Natural killer cell (primary cell): ENCODE measurements at regions of chr17 and their contacts with region 1.

Region 1: DNA sequence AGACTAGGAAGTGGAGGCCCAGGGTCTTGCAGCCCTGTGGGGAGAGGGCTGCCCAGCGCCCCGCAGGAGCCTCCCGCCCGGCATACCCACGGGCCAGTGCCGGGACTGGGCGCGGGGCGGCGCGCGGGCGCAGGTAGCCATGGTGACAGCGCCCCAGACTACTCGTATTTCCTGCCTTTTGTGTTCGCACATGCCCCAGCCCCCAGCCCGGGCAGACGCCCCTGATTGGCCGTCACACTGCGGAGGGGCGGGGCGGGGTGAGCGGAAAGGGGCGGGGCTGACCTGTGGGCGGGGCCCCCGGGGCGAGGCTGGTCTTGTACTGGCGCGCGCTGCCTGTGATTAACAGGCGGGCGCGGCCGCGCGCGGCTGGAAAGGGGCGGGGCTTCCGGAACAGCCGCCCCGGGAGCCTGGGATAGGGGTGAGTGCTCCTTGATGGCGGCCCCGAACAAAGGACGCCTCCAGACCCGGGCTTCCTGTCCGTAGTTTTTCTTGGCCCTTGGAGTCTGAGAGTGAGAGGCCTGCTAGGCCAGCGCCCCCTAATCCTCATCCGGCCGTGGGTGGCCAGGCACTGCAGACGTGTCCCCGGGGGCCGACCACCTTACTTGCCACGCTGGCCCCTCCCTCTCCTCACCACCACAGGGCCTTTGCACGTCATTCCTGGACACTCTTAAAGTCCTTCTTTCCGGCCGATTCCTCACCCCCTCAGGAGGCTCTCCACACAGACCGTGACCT is 71.0 kb downstream of the RAI1 start:
- DNase-seq: peak; percentile 96 to 97
- ATAC-seq: peak; percentile 87 to 97 (median 89)
- H3K4me3 ChIP-seq: peak overlapping the region; percentile 57
- H3K4me3 Mint-ChIP-seq: peak overlapping the region; percentile 91
- H3K27ac ChIP-seq: peak overlapping the region; percentile 93
- H3K27ac Mint-ChIP-seq: peak overlapping the region; percentile 95 to 99
- H3K4me1 ChIP-seq: peaks cover 78% of the 10 kb centered on the region
- H3K4me1 Mint-ChIP-seq: peaks cover 59 to 61% of the 10 kb centered on the region in 2 donors
- H3K27me3 ChIP-seq: no peaks in the 10 kb centered on the region
- H3K27me3 Mint-ChIP-seq: no peaks in the 10 kb centered on the region
- CTCF ChIP-seq: peak; percentile 40

Region 2: GRCh38 chr17:17535957-17536356 is 216.3 kb before region 1 on chr17:
- intact Hi-C with region 1: no loop called
- DNase-seq: no peak
- ATAC-seq: no peak
- H3K4me3 ChIP-seq: no peak overlapping the region
- H3K4me3 Mint-ChIP-seq: no peak overlapping the region
- H3K27ac ChIP-seq: no peak overlapping the region
- H3K27ac Mint-ChIP-seq: no peak overlapping the region
- H3K4me1 ChIP-seq: no peaks in the 10 kb centered on the region
- H3K4me1 Mint-ChIP-seq: peaks cover 0 to 4% of the 10 kb centered on the region in 2 donors
- H3K27me3 ChIP-seq: no peaks in the 10 kb centered on the region
- H3K27me3 Mint-ChIP-seq: no peaks in the 10 kb centered on the region
- CTCF ChIP-seq: no peak

Region 3: DNA sequence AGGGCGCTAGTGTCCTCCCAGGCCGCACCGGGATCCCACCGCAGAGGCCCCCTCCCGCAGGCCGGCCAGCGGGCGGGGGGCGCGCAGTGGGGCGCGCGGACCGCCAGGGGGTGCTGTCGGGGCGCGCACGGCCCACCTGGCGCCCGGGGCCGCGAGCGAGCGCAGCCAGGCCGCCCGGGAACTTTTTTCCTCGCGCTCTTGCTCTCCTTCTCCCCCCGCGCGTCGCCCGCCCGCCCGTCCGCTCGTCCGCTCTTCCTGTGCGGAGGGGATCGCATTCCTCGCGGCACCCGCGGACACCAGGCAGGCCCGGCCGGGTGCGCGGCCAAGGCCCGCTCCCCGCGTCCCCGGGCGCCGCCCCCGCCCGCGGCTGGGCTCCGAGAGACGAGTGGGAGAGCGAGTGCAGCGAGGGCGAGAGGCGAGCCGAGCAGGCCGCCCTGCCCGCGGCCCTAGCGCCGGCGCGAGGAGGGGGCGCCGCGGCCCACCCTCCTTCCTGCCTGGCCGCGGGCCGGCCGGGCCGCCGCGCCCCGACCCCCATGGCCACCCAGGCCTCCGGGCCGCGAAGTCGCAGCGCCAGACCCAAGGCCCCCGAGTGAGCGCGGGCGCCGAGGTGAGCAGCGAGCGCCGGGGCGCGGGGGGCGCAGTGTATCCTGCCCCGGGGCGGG is 70.9 kb before region 1 on chr17 and contains the start of gene RAI1:
- intact Hi-C with region 1: loop called (anchors 2 kb)
- DNase-seq: peak; percentile 82 to 90
- ATAC-seq: peak; percentile 63 to 86 (median 72)
- H3K4me3 ChIP-seq: peak within 1 kb of the TSS; percentile 77
- H3K4me3 Mint-ChIP-seq: peak within 1 kb of the TSS; percentile 93
- H3K27ac ChIP-seq: peak within 1 kb of the TSS; percentile 98
- H3K27ac Mint-ChIP-seq: peak within 1 kb of the TSS; percentile 91 to 96
- H3K4me1 ChIP-seq: peaks cover 34% of the 10 kb centered on the region
- H3K4me1 Mint-ChIP-seq: peaks cover 32 to 34% of the 10 kb centered on the region in 2 donors
- H3K27me3 ChIP-seq: no peaks in the 10 kb centered on the region
- H3K27me3 Mint-ChIP-seq: peaks cover 0 to 3% of the 10 kb centered on the region in 2 donors
- CTCF ChIP-seq: peak; percentile 62
- total RNA-seq, gene RAI1: 39.8 to 55.0 (median 49.4) TPM

Region 4: GRCh38 chr17:17783116-17783824 is 31.0 kb after region 1 on chr17:
- intact Hi-C with region 1: loop called (anchors 2 kb)
- DNase-seq: peak; percentile 38 to 75
- ATAC-seq: peak; percentile 52 to 57 (median 55)
- H3K4me3 ChIP-seq: peak overlapping the region; percentile 40
- H3K4me3 Mint-ChIP-seq: peak overlapping the region; percentile 98
- H3K27ac ChIP-seq: no peak overlapping the region
- H3K27ac Mint-ChIP-seq: peak overlapping the region; percentile 11 to 68
- H3K4me1 ChIP-seq: peaks cover 33% of the 10 kb centered on the region
- H3K4me1 Mint-ChIP-seq: peaks cover 32 to 38% of the 10 kb centered on the region in 2 donors
- H3K27me3 ChIP-seq: no peaks in the 10 kb centered on the region
- H3K27me3 Mint-ChIP-seq: peaks cover 0 to 4% of the 10 kb centered on the region in 2 donors
- CTCF ChIP-seq: no peak

Region 5: GRCh38 chr17:17836250-17836817 is 84.1 kb after region 1 on chr17:
- intact Hi-C with region 1: loop called (anchors 5 kb)
- DNase-seq: peak; percentile 99
- ATAC-seq: peak; percentile 77 to 92 (median 80)
- H3K4me3 ChIP-seq: peak overlapping the region; percentile 80
- H3K4me3 Mint-ChIP-seq: peak overlapping the region; percentile 92
- H3K27ac ChIP-seq: peak overlapping the region; percentile 98
- H3K27ac Mint-ChIP-seq: peak overlapping the region; percentile 92 to 98
- H3K4me1 ChIP-seq: peaks cover 63% of the 10 kb centered on the region
- H3K4me1 Mint-ChIP-seq: peaks cover 26 to 44% of the 10 kb centered on the region in 2 donors
- H3K27me3 ChIP-seq: no peaks in the 10 kb centered on the region
- H3K27me3 Mint-ChIP-seq: no peaks in the 10 kb centered on the region
- CTCF ChIP-seq: no peak